ENCODE measurements at regions of chr3 and their contacts with region 1.

Region 1: DNA sequence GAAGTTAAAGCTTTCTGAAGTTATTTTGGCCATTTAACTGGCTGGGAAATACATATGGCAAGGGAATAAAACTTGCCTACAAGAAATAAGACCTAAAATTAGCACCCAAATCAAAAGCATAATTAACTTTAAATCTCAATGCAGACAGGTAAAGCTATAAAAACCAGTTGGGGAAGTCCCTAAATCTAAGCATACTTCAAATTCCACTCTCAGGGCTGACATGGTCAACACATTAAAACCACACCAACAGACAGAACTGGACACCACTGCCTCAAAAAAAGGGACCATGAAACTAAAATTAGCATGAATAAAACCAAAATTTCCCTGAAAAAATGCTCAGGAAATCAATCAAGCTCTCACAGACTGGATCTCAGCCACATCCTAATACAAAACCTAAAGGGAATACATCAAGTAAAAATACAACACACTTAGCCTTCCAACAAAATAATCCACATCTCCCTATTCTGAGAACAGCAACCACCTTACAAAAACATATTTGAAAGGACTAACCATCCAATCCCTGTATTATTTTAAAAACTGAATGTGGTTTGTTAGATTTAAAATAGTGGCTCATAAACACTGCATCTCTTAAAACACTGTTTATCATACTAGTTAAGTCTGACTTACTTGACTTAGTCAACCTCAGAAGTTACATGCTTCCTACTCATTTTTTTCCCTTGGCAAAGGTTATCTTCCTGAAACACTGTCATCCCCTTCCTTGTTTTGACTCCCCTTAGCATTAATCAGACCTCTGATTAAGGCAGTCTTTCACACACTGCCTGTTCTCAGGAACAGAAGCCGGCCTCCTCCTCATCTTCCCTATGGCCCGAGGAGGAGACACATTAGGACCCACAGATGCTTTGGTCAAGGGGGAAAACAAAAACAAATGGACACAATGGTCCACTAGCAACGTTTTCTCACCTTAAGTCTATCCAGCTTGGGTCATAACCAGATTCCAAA is 8.3 kb downstream of the TRA2B start:
- DNase-seq: no peak
- ATAC-seq: peak in 3 of 4 donors; percentile 39 to 71 (median 59)
- H3K4me3 ChIP-seq: peak overlapping the region; percentile 99
- H3K27ac ChIP-seq: peak overlapping the region; percentile 100
- H3K4me1 ChIP-seq: peaks cover 98% of the 10 kb centered on the region
- H3K27me3 ChIP-seq: no peaks in the 10 kb centered on the region
- CTCF ChIP-seq: no peak

Region 2: GRCh38 chr3:186083746-186084145 is 154.3 kb after region 1 on chr3:
- intact Hi-C with region 1: no loop called
- DNase-seq: no peak
- ATAC-seq: peak in 1 of 4 donors; percentile 47
- H3K4me3 ChIP-seq: no peak overlapping the region
- H3K27ac ChIP-seq: no peak overlapping the region
- H3K4me1 ChIP-seq: no peaks in the 10 kb centered on the region
- H3K27me3 ChIP-seq: no peaks in the 10 kb centered on the region
- CTCF ChIP-seq: no peak

Region 3: GRCh38 chr3:186806089-186807055 is 876.9 kb after region 1 on chr3 and contains the start of gene RFC4:
- intact Hi-C with region 1: loop called in 1 of 2 experiments (anchors 10 kb)
- DNase-seq: peak; percentile 88 to 91
- ATAC-seq: peak; percentile 96 to 100 (median 98)
- H3K4me3 ChIP-seq: peak within 1 kb of the TSS; percentile 98
- H3K27ac ChIP-seq: peak within 1 kb of the TSS; percentile 94
- H3K4me1 ChIP-seq: peaks cover 10% of the 10 kb centered on the region
- H3K27me3 ChIP-seq: no peaks in the 10 kb centered on the region
- CTCF ChIP-seq: no peak
- total RNA-seq, gene RFC4: 3.4 to 8.1 (median 6.0) TPM

Measured in psoas muscle (tissue), 8 donors.